ENCODE measurements at regions of chr12 and their contacts with region 1.

Region 1: GRCh38 chr12:66409195-66409871 is 107.0 kb downstream of the HELB start:
- DNase-seq: peak; percentile 17
- H3K4me3 ChIP-seq: no peak overlapping the region
- H3K27me3 ChIP-seq: no peaks in the 10 kb centered on the region
- CTCF ChIP-seq: peak; percentile 79

Region 2: DNA sequence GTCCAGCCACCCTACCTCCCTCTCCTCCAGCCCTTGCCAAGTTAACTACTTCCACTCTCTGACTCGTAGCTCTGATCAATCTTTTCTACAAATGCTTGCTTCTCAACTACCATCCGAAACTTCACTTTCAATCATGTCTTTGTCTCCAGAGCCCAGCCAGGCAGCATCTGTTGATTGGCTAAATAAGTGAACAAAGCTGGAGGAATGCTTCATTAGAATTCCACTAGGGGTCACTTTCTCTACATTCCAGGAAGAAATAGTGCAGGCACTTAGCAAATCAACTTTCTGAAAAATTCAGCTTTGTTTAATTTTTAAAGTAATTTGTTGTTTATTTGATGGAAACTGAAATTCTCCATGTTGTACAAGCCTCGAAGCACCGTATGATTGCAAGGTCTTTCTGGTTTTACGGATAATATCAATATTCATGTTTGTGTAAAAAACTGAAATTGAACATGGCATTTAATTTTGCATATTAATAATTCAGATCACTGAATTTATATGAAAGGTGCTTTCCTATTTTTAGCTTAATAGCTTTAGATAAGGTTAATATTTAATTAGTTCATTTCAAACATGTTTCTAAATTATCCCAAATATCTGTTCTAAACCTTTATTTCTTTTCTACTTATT is 139.5 kb before region 1 on chr12:
- CTCF ChIA-PET with region 1: interaction called, 36 read pairs
- POLR2A ChIA-PET with region 1: interaction called, 3 read pairs
- DNase-seq: no peak
- H3K4me3 ChIP-seq: no peak overlapping the region
- H3K27me3 ChIP-seq: peaks cover 3% of the 10 kb centered on the region; the same call in 1 of the 2 replicates
- CTCF ChIP-seq: peak; percentile 72

Region 3: DNA sequence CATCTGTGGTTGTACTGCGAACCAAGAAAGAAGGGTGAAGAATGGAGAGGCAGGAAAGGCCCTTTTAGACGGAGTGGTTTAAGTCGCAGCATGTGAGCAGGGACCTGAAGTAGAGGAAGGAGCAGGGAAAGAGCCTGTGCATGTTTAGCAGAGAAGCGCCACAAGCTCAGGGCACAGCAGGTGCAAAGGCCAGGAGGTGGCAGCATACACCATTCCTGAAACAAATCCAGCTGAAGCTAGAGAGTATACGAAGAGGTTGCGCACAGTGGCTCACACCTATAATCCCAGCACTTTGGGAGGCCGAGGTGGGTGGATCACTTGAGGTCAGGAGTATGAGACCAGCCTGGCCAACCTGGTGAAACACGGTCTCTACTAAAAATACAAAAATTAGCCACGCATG is 57.1 kb before region 1 on chr12:
- CTCF ChIA-PET with region 1: interaction called, 12 read pairs
- POLR2A ChIA-PET with region 1: no interaction called
- DNase-seq: no peak
- H3K4me3 ChIP-seq: no peak overlapping the region
- H3K27me3 ChIP-seq: no peaks in the 10 kb centered on the region; the same call in 1 of the 2 replicates
- CTCF ChIP-seq: peak; percentile 37; the same call in 1 of the 2 replicates

Region 4: DNA sequence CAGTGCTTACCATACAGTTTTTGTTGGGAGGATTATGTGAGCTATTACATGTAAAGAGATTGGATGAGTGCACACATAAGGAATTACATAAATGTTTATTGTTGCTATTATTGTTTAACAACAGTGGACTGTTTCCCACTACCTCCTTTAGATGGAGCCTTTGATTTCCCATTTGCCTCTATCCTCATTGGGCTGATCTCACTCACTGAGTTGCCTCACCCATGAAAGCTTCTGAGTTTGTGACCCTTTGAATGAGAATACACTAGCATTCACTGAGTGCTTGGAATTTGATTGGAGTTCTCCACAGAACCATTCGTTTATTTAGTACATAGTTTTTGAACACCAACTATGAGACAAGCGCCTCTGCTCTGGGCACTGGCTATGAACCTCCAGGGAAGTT is 13.9 kb after region 1 on chr12:
- CTCF ChIA-PET with region 1: interaction called, 10 read pairs
- POLR2A ChIA-PET with region 1: no interaction called
- DNase-seq: no peak
- H3K4me3 ChIP-seq: no peak overlapping the region
- H3K27me3 ChIP-seq: no peaks in the 10 kb centered on the region
- CTCF ChIP-seq: no peak